CD14-positive monocyte (primary cell): ENCODE measurements at regions of chr1 and their contacts with region 1.

Region 1: DNA sequence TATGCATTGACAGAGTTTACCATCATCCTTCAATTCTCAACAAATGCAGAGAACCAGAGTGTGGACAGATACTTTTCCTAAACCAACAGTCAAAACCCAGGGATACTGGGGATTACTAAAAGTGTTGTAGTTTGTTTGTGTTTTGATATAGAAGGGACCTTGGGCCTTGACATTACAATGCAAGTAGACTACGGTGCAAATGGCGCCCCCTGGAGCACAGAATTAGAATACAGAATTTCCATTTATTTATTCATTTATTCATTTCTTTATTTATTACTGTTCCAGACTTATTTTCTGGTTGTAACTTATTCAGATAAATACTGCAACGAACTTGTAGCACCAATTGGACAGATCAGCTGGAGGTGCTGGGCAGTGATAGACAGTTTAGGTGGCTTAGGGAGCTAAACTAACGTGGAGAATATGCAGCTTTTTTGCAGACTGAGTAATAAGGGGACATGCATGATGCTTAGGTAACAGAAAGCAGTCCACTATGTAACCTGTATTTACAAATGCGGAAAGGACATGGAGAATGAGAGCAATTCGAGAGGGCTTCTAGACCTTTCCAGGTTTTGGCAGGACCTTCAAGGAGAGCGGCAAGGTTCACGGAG is 42.6 kb downstream of the KIRREL1 start:
- DNase-seq: peak; percentile 13 to 27 (median 26)
- H3K4me3 ChIP-seq: no peak overlapping the region
- H3K4me3 Mint-ChIP-seq: no peak overlapping the region
- H3K27ac ChIP-seq: no peak overlapping the region
- H3K27ac Mint-ChIP-seq: no peak overlapping the region
- H3K4me1 ChIP-seq: peaks cover 4 to 7% of the 10 kb centered on the region in 2 donors
- H3K4me1 Mint-ChIP-seq: peaks cover 11% of the 10 kb centered on the region
- H3K27me3 ChIP-seq: no peaks in the 10 kb centered on the region
- H3K27me3 Mint-ChIP-seq: peaks cover 1 to 11% (median 10%) of the 10 kb centered on the region in 3 donors
- CTCF ChIP-seq: peak; percentile 84

Region 2: GRCh38 chr1:157969697-157970485 is 66.2 kb before region 1 on chr1:
- intact Hi-C with region 1: loop called in 1 of 2 experiments (anchors 5 kb)
- DNase-seq: peak in 2 of 3 donors; percentile 8 to 30
- H3K4me3 ChIP-seq: no peak overlapping the region
- H3K4me3 Mint-ChIP-seq: no peak overlapping the region
- H3K27ac ChIP-seq: no peak overlapping the region
- H3K27ac Mint-ChIP-seq: no peak overlapping the region
- H3K4me1 ChIP-seq: no peaks in the 10 kb centered on the region
- H3K4me1 Mint-ChIP-seq: peaks cover 9% of the 10 kb centered on the region
- H3K27me3 ChIP-seq: no peaks in the 10 kb centered on the region
- H3K27me3 Mint-ChIP-seq: peaks cover 0 to 3% (median 2%) of the 10 kb centered on the region in 3 donors
- CTCF ChIP-seq: peak; percentile 79